ENCODE measurements at regions of chr3 and their contacts with region 1.

Region 1: GRCh38 chr3:122679085-122679881 is 1.4 kb upstream of the PARP14 start:
- DNase-seq: peak; percentile 88
- H3K4me3 ChIP-seq: peak overlapping the region; percentile 84
- H3K27ac ChIP-seq: peak overlapping the region; percentile 94
- H3K4me1 ChIP-seq: peaks cover 7% of the 10 kb centered on the region
- H3K27me3 ChIP-seq: no peaks in the 10 kb centered on the region
- CTCF ChIP-seq: peak; percentile 62

Region 2: GRCh38 chr3:122030381-122031122 is 648.7 kb before region 1 on chr3:
- intact Hi-C with region 1: no loop called
- DNase-seq: no peak
- H3K4me3 ChIP-seq: no peak overlapping the region
- H3K27ac ChIP-seq: no peak overlapping the region
- H3K4me1 ChIP-seq: no peaks in the 10 kb centered on the region
- H3K27me3 ChIP-seq: no peaks in the 10 kb centered on the region
- CTCF ChIP-seq: no peak

Region 3: DNA sequence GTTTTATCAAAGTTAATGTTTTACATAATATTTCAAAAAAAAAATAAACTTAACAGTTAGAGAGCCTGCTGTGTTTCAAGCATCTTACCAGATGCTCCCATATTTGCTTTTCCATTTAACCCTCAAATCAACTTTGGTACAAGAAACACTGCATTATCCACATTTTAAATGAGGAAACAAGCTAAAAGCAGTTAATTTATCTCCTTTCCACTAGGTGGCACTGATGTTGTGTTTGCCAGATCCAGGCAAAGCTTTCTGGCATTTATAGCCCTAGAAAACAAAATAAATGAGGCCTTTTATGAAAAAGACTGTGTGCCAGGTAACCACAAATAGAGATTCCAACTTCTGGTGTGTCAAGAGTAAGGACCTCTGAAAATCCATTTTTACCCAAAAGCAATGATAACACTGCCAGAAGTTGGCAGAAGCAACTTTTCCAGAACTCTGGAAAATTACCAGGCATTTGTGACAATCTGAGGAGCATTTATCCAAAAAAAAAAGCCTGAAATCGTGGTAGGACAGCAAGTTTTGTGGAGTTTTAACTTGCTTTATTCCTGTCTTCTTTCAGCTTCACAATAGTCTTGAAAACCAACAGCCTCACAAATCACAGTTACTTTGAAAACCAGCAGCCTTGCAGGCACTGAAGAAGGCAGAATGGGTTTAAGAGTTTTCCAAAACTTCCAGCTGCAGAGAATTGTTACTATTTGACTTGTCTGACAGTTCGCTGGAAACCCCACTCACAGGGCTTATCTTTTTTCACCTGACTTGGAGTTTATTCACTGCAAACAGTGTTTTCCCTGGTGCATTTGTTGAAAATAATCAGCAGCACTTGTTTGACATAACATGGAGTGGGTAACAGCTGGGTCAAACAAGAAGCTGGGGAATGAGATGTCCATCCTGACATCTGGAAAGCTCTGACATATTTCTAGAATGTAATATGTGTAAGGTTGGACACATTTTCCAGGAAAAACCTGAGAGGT is 286.1 kb before region 1 on chr3:
- intact Hi-C with region 1: loop called (anchors 10 kb)
- DNase-seq: no peak
- H3K4me3 ChIP-seq: no peak overlapping the region
- H3K27ac ChIP-seq: no peak overlapping the region
- H3K4me1 ChIP-seq: no peaks in the 10 kb centered on the region
- H3K27me3 ChIP-seq: no peaks in the 10 kb centered on the region
- CTCF ChIP-seq: peak; percentile 46

Region 4: GRCh38 chr3:122458992-122459391 is 220.3 kb before region 1 on chr3:
- intact Hi-C with region 1: loop called (anchors 10 kb)
- DNase-seq: no peak
- H3K4me3 ChIP-seq: no peak overlapping the region
- H3K27ac ChIP-seq: no peak overlapping the region
- H3K4me1 ChIP-seq: no peaks in the 10 kb centered on the region
- H3K27me3 ChIP-seq: no peaks in the 10 kb centered on the region
- CTCF ChIP-seq: no peak

Region 5: DNA sequence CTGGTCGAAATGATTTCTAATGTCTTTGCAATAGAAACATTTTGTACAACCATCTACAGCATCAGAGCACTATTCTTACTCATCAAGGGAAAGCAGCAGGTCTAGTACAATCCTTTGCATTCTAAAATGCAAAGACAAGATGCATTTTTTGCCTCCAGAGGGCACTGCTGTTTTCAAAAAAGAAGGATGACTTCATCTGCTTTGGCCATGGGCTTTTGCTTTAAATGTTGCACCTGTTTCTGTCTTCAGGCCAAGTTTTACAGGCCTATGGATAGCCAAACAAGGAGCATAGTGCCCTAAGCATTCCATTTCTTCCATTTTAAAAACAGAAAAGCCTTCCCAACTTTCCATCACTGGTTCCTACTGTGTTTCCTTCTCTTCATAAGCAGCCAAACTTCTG is 118.6 kb before region 1 on chr3:
- intact Hi-C with region 1: loop called (anchors 2 kb)
- DNase-seq: peak; percentile 63
- H3K4me3 ChIP-seq: no peak overlapping the region
- H3K27ac ChIP-seq: no peak overlapping the region
- H3K4me1 ChIP-seq: no peaks in the 10 kb centered on the region
- H3K27me3 ChIP-seq: no peaks in the 10 kb centered on the region
- CTCF ChIP-seq: peak; percentile 43

Region 6: GRCh38 chr3:122621112-122621511 is 58.2 kb before region 1 on chr3:
- intact Hi-C with region 1: no loop called
- DNase-seq: no peak
- H3K4me3 ChIP-seq: no peak overlapping the region
- H3K27ac ChIP-seq: no peak overlapping the region
- H3K4me1 ChIP-seq: no peaks in the 10 kb centered on the region
- H3K27me3 ChIP-seq: no peaks in the 10 kb centered on the region
- CTCF ChIP-seq: no peak

Region 7: GRCh38 chr3:122745346-122746021 is 66.2 kb after region 1 on chr3:
- intact Hi-C with region 1: no loop called
- DNase-seq: no peak
- H3K4me3 ChIP-seq: no peak overlapping the region
- H3K27ac ChIP-seq: no peak overlapping the region
- H3K4me1 ChIP-seq: no peaks in the 10 kb centered on the region
- H3K27me3 ChIP-seq: no peaks in the 10 kb centered on the region
- CTCF ChIP-seq: no peak

Region 8: DNA sequence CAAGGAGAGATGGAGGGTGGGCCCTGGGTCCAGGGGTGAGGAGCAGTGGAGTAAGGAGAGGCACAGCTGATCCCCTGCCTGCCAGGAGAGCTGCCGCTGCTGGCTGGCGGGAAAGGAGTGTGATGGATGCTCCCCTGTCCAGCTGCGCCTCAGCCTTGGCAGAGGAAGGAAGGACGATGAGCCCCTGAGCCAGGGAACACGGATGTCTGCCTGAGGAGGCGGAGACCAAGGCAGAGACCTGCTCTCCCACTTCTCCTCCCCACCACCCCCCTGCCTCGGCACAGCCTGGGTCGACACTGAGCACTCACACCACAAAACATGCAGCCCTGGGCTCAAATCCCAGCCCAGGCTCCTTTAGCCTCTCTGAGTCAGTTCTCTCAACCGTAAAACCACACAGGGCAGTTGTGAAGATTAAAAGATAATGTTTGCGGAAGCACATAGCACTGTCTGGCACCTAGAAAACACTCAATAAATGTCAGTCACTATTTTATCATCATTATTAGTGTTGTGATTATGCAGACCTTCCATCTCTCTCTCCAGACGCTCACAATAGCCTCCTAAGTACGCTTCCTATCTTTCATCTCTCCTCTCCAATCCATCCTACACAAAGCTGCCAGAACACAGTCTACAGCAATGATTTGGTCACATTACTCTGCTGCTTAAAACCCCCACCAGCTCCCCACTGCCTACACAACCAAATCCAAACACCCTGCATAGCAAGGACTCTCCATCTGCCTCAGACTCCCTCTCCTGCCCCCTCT is 296.1 kb after region 1 on chr3:
- intact Hi-C with region 1: no loop called
- DNase-seq: no peak
- H3K4me3 ChIP-seq: no peak overlapping the region
- H3K27ac ChIP-seq: no peak overlapping the region
- H3K4me1 ChIP-seq: no peaks in the 10 kb centered on the region
- H3K27me3 ChIP-seq: no peaks in the 10 kb centered on the region
- CTCF ChIP-seq: no peak